Activated T-helper 1 cell treated with anti-CD3 and anti-CD28 coated beads, Interleukin-12 subunit alpha, Interleukin-12 subunit beta, Interleukin-2, Interleukin-4 antibody, amounts not matched to agents 30 ng/mL and 10 ng/mL and 1 ng/mL, durations not matched to agents 14 hours and 24 hours and 36 hours (primary cell): ENCODE measurements at regions of chr5 and their contacts with region 1.

Region 1: GRCh38 chr5:76867827-76868693 is 18.2 kb downstream of the S100Z start:
- DNase-seq: peak; percentile 50
- H3K4me3 Mint-ChIP-seq: no peak overlapping the region
- H3K27ac Mint-ChIP-seq: no peak overlapping the region
- H3K4me1 Mint-ChIP-seq: peaks cover 5% of the 10 kb centered on the region
- H3K27me3 Mint-ChIP-seq: peaks cover 2% of the 10 kb centered on the region

Region 2: DNA sequence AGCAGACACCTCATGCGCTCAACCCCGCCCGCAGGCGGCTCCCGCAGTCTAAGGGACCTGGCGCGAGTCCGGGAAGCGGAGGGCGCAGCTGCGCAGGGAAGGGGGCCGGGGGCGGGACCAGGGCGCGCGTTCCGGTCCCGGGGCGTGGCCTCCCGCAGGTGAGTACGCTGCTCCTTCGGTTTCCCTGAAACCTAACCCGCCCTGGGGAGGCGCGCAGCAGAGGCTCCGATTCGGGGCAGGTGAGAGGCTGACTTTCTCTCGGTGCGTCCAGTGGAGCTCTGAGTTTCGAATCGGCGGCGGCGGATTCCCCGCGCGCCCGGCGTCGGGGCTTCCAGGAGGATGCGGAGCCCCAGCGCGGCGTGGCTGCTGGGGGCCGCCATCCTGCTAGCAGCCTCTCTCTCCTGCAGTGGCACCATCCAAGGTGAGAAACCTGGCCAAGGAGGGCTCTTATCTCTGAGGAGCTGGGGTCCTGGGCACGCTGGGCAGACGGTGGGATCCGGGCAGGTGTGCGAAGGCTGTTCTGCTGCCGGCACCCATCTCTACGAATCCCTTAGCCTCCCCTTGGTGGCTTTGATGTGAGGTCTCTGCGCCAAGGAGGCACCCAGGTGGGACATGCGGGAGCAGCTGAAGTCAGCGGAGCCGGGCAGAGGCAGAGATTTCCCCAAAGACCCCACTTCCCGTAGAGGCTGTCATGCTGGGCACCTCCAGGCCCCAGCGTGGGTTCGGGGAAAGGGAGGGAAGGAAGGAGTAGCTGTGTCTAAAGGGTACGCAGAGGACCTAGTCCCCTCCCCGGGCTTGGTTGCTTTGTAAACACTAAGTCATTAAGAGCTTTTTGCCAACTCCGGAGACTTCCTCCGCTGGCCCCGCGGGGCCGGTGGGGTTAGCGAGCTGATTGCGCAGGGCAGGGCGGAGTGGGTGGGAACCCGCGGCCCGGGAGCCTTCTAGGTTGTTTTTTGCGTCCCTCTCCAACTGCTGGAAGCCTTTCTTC is 48.9 kb before region 1 on chr5 and contains the start of gene F2RL1:
- intact Hi-C with region 1: no loop called
- DNase-seq: peak; percentile 17
- H3K4me3 Mint-ChIP-seq: peak within 1 kb of the TSS; percentile 74
- H3K27ac Mint-ChIP-seq: no peak within 1 kb of the TSS
- H3K4me1 Mint-ChIP-seq: peaks cover 9% of the 10 kb centered on the region
- H3K27me3 Mint-ChIP-seq: peaks cover 68% of the 10 kb centered on the region
- total RNA-seq, gene F2RL1: 0.26 and 0.32 TPM in 2 replicates

Region 3: GRCh38 chr5:76920491-76920890 is 52.4 kb after region 1 on chr5:
- intact Hi-C with region 1: no loop called
- DNase-seq: no peak
- H3K4me3 Mint-ChIP-seq: no peak overlapping the region
- H3K27ac Mint-ChIP-seq: no peak overlapping the region
- H3K4me1 Mint-ChIP-seq: no peaks in the 10 kb centered on the region
- H3K27me3 Mint-ChIP-seq: peaks cover 12% of the 10 kb centered on the region

Region 4: GRCh38 chr5:76983468-76983867 is 115.4 kb after region 1 on chr5:
- intact Hi-C with region 1: no loop called
- DNase-seq: no peak
- H3K4me3 Mint-ChIP-seq: no peak overlapping the region
- H3K27ac Mint-ChIP-seq: no peak overlapping the region
- H3K4me1 Mint-ChIP-seq: no peaks in the 10 kb centered on the region
- H3K27me3 Mint-ChIP-seq: peaks cover 5% of the 10 kb centered on the region

Region 5: DNA sequence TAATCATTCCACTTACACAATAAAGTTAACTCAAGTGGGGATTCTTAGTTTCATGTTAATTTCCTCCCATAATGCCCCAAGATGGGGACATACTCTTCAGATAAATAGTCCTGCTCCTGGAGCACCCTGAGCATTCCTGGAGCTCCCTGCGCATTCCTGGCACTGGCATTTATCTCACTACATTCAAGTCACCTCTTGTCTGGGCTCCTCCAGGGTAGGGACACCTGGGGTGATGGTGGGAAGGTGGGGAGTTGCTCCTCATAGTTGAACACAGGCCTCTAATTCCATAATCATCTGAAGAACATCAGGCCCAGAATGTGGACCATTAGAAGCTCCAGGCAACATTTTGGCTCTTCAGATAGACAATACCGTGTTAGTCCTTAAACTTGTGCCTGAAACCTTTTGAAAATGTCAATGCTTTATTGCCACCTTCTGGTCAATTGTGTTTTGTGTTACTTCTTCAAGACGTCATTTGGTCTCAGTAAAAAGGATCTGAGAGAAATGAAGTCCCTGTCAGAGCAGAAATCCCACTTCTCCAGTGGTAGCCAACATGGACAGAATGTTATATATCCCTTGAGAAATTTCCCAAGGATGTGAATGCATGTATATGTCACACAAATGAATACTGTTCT is 148.0 kb after region 1 on chr5:
- intact Hi-C with region 1: loop called (anchors 1 kb)
- DNase-seq: no peak
- H3K4me3 Mint-ChIP-seq: no peak overlapping the region
- H3K27ac Mint-ChIP-seq: no peak overlapping the region
- H3K4me1 Mint-ChIP-seq: peaks cover 12% of the 10 kb centered on the region
- H3K27me3 Mint-ChIP-seq: peaks cover 19% of the 10 kb centered on the region

Region 6: GRCh38 chr5:77076961-77077823 is 209.1 kb after region 1 on chr5:
- intact Hi-C with region 1: loop called (anchors 1 kb)
- DNase-seq: peak; percentile 46
- H3K4me3 Mint-ChIP-seq: peak overlapping the region; percentile 61
- H3K27ac Mint-ChIP-seq: no peak overlapping the region
- H3K4me1 Mint-ChIP-seq: no peaks in the 10 kb centered on the region
- H3K27me3 Mint-ChIP-seq: peaks cover 3% of the 10 kb centered on the region

Region 7: GRCh38 chr5:77117161-77117560 is 249.1 kb after region 1 on chr5:
- intact Hi-C with region 1: no loop called
- DNase-seq: no peak
- H3K4me3 Mint-ChIP-seq: no peak overlapping the region
- H3K27ac Mint-ChIP-seq: no peak overlapping the region
- H3K4me1 Mint-ChIP-seq: no peaks in the 10 kb centered on the region
- H3K27me3 Mint-ChIP-seq: peaks cover 9% of the 10 kb centered on the region

Region 8: GRCh38 chr5:77437194-77437593 is 569.1 kb after region 1 on chr5:
- intact Hi-C with region 1: loop called (anchors 2 kb)
- DNase-seq: no peak
- H3K4me3 Mint-ChIP-seq: no peak overlapping the region
- H3K27ac Mint-ChIP-seq: no peak overlapping the region
- H3K4me1 Mint-ChIP-seq: no peaks in the 10 kb centered on the region
- H3K27me3 Mint-ChIP-seq: no peaks in the 10 kb centered on the region